ENCODE measurements at regions of chr2 and their contacts with region 1.

Region 1: DNA sequence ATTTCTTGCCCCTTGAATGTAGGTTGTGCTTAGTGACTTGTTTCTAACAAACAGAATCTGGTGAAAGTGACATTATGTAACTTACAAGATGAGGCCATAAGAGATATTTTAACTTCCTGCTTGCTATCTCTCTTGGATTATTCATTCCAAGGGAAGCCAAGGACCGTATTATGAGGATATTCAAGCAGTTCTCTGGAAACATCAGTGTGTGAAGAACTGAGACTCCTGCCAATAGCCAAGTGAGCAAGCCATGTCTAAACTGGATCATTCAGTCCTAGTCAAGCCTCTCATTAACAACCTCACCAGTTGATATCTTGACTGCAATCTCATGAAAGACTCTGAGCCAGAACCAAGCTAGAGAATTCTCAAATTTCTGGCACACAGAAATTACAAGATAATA is 765.1 kb upstream of the SLC8A1 start:
- DNase-seq: no peak
- H3K4me3 ChIP-seq: no peak overlapping the region
- H3K27ac ChIP-seq: no peak overlapping the region
- H3K4me1 ChIP-seq: no peaks in the 10 kb centered on the region
- H3K27me3 ChIP-seq: no peaks in the 10 kb centered on the region
- CTCF ChIP-seq: no peak

Region 2: GRCh38 chr2:41377837-41378236 is 160.9 kb after region 1 on chr2:
- CTCF ChIA-PET with region 1: no interaction called
- POLR2A ChIA-PET with region 1: interaction called, 19 read pairs
- intact Hi-C with region 1: no loop called
- DNase-seq: no peak
- H3K4me3 ChIP-seq: no peak overlapping the region
- H3K27ac ChIP-seq: no peak overlapping the region
- H3K4me1 ChIP-seq: no peaks in the 10 kb centered on the region
- H3K27me3 ChIP-seq: peaks cover 5% of the 10 kb centered on the region; the same call in 1 of the 2 replicates
- CTCF ChIP-seq: no peak